Activated naive CD4-positive, alpha-beta T cell treated with anti-CD3 and anti-CD28 coated beads for 36 hours (primary cell): ENCODE measurements at regions of chr7 and their contacts with region 1.

Region 1: GRCh38 chr7:87059525-87060287 is at the start of gene ELAPOR2:
- DNase-seq: peak; percentile 79
- H3K4me3 Mint-ChIP-seq: peak within 1 kb of the TSS; percentile 71
- H3K27ac Mint-ChIP-seq: no peak within 1 kb of the TSS
- H3K4me1 Mint-ChIP-seq: peaks cover 12% of the 10 kb centered on the region
- H3K27me3 Mint-ChIP-seq: peaks cover 5% of the 10 kb centered on the region
- total RNA-seq, gene ELAPOR2: 3.2 to 3.9 TPM

Region 2: DNA sequence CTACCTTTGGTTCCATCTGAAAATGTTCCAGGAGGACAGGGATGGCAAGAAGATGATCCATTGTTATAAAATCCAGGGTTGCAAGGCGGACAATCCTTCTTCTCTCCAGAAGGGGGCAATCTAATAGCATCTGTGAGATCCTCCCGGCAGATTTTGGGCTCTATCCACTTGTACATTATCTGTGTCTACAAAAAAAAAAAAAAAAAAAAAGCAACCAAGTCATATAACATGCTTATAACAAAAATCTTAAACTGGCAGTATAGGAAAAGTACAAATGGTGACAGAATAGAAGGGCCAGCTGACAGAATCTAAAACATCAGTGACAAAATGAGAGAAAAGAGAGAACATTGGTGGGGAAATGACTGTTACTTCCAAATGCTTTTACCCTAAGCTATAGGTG is 133.0 kb before region 1 on chr7:
- CTCF ChIA-PET with region 1: no interaction called
- intact Hi-C with region 1: loop called (anchors 2 kb)
- DNase-seq: peak; percentile 43
- H3K4me3 Mint-ChIP-seq: no peak overlapping the region
- H3K27ac Mint-ChIP-seq: no peak overlapping the region
- H3K4me1 Mint-ChIP-seq: peaks cover 16% of the 10 kb centered on the region
- H3K27me3 Mint-ChIP-seq: peaks cover 2% of the 10 kb centered on the region

Region 3: GRCh38 chr7:86939197-86939814 is 120.4 kb before region 1 on chr7:
- CTCF ChIA-PET with region 1: no interaction called
- intact Hi-C with region 1: loop called (anchors 1 kb)
- DNase-seq: peak; percentile 62
- H3K4me3 Mint-ChIP-seq: no peak overlapping the region
- H3K27ac Mint-ChIP-seq: no peak overlapping the region
- H3K4me1 Mint-ChIP-seq: no peaks in the 10 kb centered on the region
- H3K27me3 Mint-ChIP-seq: no peaks in the 10 kb centered on the region

Region 4: GRCh38 chr7:87038993-87039716 is 20.6 kb before region 1 on chr7:
- CTCF ChIA-PET with region 1: no interaction called
- intact Hi-C with region 1: no loop called
- DNase-seq: no peak
- H3K4me3 Mint-ChIP-seq: peak overlapping the region; percentile 65
- H3K27ac Mint-ChIP-seq: peak overlapping the region; percentile 7
- H3K4me1 Mint-ChIP-seq: no peaks in the 10 kb centered on the region
- H3K27me3 Mint-ChIP-seq: peaks cover 5% of the 10 kb centered on the region

Region 5: GRCh38 chr7:88184848-88185304 is 1125.2 kb after region 1 on chr7:
- CTCF ChIA-PET with region 1: no interaction called
- intact Hi-C with region 1: no loop called
- DNase-seq: no peak
- H3K4me3 Mint-ChIP-seq: no peak overlapping the region
- H3K27ac Mint-ChIP-seq: no peak overlapping the region
- H3K4me1 Mint-ChIP-seq: no peaks in the 10 kb centered on the region
- H3K27me3 Mint-ChIP-seq: no peaks in the 10 kb centered on the region